ENCODE measurements at regions of chr6 and their contacts with region 1.

Region 1: GRCh38 chr6:160930547-160931377 is 60.8 kb upstream of the MAP3K4 start:
- DNase-seq: peak; percentile 86
- H3K4me3 ChIP-seq: peak overlapping the region; percentile 51 to 70
- H3K27ac ChIP-seq: no peak overlapping the region
- H3K4me1 ChIP-seq: no peaks in the 10 kb centered on the region
- H3K27me3 ChIP-seq: no peaks in the 10 kb centered on the region; the same call in 1 of the 2 replicates
- CTCF ChIP-seq: peak; percentile 97
- EP300 ChIP-seq: no peak
- RAD21 ChIP-seq: peak; percentile 92

Region 2: GRCh38 chr6:160972111-160972510 is 41.3 kb after region 1 on chr6:
- CTCF ChIA-PET with region 1: interaction called, 11 read pairs
- POLR2A ChIA-PET with region 1: no interaction called
- DNase-seq: no peak
- H3K4me3 ChIP-seq: no peak overlapping the region
- H3K27ac ChIP-seq: no peak overlapping the region
- H3K4me1 ChIP-seq: peaks cover 0 to 14% of the 10 kb centered on the region in 2 experiments; a peak in 2 of 4 replicates
- H3K27me3 ChIP-seq: no peaks in the 10 kb centered on the region
- CTCF ChIP-seq: no peak
- EP300 ChIP-seq: no peak
- RAD21 ChIP-seq: no peak

Region 3: GRCh38 chr6:160992061-160992979 is 61.6 kb after region 1 on chr6:
- CTCF ChIA-PET with region 1: interaction called, 59 read pairs
- POLR2A ChIA-PET with region 1: no interaction called
- DNase-seq: peak; percentile 70
- H3K4me3 ChIP-seq: peak overlapping the region; percentile 89 to 90
- H3K27ac ChIP-seq: peak overlapping the region; percentile 86 to 92
- H3K4me1 ChIP-seq: peaks cover 3 to 5% of the 10 kb centered on the region in 2 experiments; a peak in 3 of 4 replicates
- H3K27me3 ChIP-seq: no peaks in the 10 kb centered on the region
- CTCF ChIP-seq: peak; percentile 77
- EP300 ChIP-seq: no peak
- RAD21 ChIP-seq: peak; percentile 73

Region 4: GRCh38 chr6:161094955-161095354 is 164.2 kb after region 1 on chr6:
- CTCF ChIA-PET with region 1: interaction called, 17 read pairs
- POLR2A ChIA-PET with region 1: no interaction called
- DNase-seq: no peak
- H3K4me3 ChIP-seq: no peak overlapping the region
- H3K27ac ChIP-seq: no peak overlapping the region
- H3K4me1 ChIP-seq: peaks cover 0 to 13% of the 10 kb centered on the region in 2 experiments; a peak in 1 of 4 replicates
- H3K27me3 ChIP-seq: no peaks in the 10 kb centered on the region
- CTCF ChIP-seq: no peak
- EP300 ChIP-seq: no peak
- RAD21 ChIP-seq: no peak

Region 5: DNA sequence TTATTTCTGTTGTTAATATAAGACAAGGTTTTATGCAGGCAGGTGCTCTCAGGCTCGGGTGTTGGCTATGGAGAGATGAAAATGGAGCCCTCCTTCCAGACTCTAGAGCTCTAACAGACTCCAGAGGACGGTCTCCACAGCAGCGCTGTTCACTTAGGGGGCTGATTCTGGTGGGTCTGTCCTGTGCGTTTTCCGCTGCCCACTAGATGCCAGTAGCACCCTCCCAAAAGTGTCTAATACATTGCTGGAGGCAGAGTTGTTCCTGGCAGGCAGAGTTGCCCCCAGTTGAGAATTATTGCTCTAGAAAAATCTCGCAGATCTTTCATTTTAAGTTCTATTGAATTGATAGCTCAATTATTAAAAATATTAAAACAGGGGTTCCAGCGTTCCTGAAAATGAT is 170.8 kb after region 1 on chr6:
- CTCF ChIA-PET with region 1: interaction called, 17 read pairs
- POLR2A ChIA-PET with region 1: no interaction called
- DNase-seq: peak; percentile 43
- H3K4me3 ChIP-seq: no peak overlapping the region; a peak in 1 of 4 replicates
- H3K27ac ChIP-seq: no peak overlapping the region
- H3K4me1 ChIP-seq: peaks cover 0 to 5% of the 10 kb centered on the region in 2 experiments; a peak in 1 of 4 replicates
- H3K27me3 ChIP-seq: no peaks in the 10 kb centered on the region
- CTCF ChIP-seq: peak; percentile 51
- EP300 ChIP-seq: no peak
- RAD21 ChIP-seq: peak; percentile 61

Region 6: GRCh38 chr6:161359618-161359945 is 428.8 kb after region 1 on chr6:
- CTCF ChIA-PET with region 1: interaction called, 20 read pairs
- POLR2A ChIA-PET with region 1: no interaction called
- DNase-seq: no peak
- H3K4me3 ChIP-seq: no peak overlapping the region
- H3K27ac ChIP-seq: no peak overlapping the region
- H3K4me1 ChIP-seq: peaks cover 0 to 4% of the 10 kb centered on the region in 2 experiments; a peak in 1 of 4 replicates
- H3K27me3 ChIP-seq: no peaks in the 10 kb centered on the region
- CTCF ChIP-seq: no peak
- EP300 ChIP-seq: no peak
- RAD21 ChIP-seq: no peak

Region 7: GRCh38 chr6:161379834-161380598 is 449.3 kb after region 1 on chr6:
- CTCF ChIA-PET with region 1: interaction called, 380 read pairs
- POLR2A ChIA-PET with region 1: no interaction called
- DNase-seq: peak; percentile 48
- H3K4me3 ChIP-seq: no peak overlapping the region
- H3K27ac ChIP-seq: no peak overlapping the region
- H3K4me1 ChIP-seq: peaks cover 0 to 26% of the 10 kb centered on the region in 2 experiments; a peak in 1 of 4 replicates
- H3K27me3 ChIP-seq: no peaks in the 10 kb centered on the region
- CTCF ChIP-seq: no peak
- EP300 ChIP-seq: no peak
- RAD21 ChIP-seq: no peak

Measured in SK-N-SH (cell line).